Endothelial cell of umbilical vein (primary cell): ENCODE measurements at regions of chr1 and their contacts with region 1.

Region 1: DNA sequence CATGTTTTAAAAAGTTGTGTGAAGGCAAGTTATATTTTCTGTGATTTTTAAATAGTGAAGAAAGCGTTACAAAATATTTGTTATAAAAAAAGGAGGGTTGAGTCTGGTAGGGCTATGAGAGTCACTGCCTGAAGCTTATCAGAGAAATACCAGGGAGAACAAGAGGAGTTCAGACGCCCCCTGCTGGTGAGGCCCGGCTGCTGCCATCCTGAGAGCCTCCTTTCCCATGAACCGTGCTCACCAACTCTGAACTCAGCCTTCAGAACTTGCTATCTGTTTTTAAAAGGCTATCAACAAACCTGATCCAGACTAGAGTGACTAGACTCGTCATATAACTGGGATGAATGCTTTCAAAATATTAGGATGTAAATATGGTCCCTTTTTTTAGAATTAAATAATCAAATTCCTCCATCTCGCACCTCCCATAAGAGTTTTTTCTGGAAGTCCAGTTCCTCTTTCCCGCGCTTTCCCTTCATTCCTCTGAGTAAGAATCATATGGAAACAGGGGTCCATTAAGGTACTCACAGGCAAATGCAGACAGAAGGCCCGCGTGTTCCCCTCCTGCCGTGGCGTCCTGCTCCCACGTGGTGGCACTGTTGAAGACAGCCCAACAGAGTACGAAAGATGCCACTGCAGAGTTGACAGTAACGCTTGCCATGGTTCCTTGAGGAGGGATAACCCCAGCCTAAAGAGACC is 26.2 kb upstream of the SPATA6 start:
- DNase-seq: peak; percentile 73
- H3K4me3 ChIP-seq: no peak overlapping the region
- H3K27ac ChIP-seq: no peak overlapping the region
- H3K4me1 ChIP-seq: peaks cover 7% of the 10 kb centered on the region
- H3K27me3 ChIP-seq: no peaks in the 10 kb centered on the region
- CTCF ChIP-seq: peak; percentile 93 to 96
- POLR2A ChIP-seq: no peak

Region 2: GRCh38 chr1:47650197-47650596 is 848.0 kb before region 1 on chr1:
- CTCF ChIA-PET with region 1: no interaction called
- POLR2A ChIA-PET with region 1: no interaction called
- dilution Hi-C with region 1: no loop called
- intact Hi-C with region 1: no loop called
- DNase-seq: peak; percentile 96
- H3K4me3 ChIP-seq: no peak overlapping the region
- H3K27ac ChIP-seq: peak overlapping the region; percentile 74
- H3K4me1 ChIP-seq: peaks cover 11% of the 10 kb centered on the region
- H3K27me3 ChIP-seq: no peaks in the 10 kb centered on the region
- CTCF ChIP-seq: no peak
- POLR2A ChIP-seq: no peak

Region 3: DNA sequence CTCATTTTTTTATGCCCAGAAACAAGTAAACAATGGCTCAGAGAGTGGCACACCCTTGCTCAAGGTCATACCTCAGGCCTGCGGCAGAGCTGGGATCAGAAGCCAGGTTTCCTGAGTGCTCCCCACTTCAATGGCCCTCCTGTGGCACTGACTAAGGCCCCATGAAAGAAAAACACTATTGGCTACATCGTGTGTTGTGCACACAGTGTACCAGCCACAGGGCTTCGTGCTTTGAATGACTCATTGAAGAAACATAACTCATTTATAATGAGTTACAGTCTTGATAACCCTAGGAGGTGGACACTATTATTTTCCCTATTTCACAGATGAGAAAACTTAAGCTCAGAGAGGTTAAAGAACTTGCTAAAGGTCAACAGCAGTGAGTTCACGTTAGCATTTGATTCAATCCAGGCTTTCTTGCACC is 592.2 kb before region 1 on chr1:
- CTCF ChIA-PET with region 1: no interaction called
- POLR2A ChIA-PET with region 1: no interaction called
- dilution Hi-C with region 1: no loop called
- intact Hi-C with region 1: no loop called
- DNase-seq: peak; percentile 93
- H3K4me3 ChIP-seq: no peak overlapping the region
- H3K27ac ChIP-seq: peak overlapping the region; percentile 35
- H3K4me1 ChIP-seq: peaks cover 23% of the 10 kb centered on the region
- H3K27me3 ChIP-seq: no peaks in the 10 kb centered on the region
- CTCF ChIP-seq: no peak
- POLR2A ChIP-seq: no peak

Region 4: GRCh38 chr1:48202030-48202752 is 296.1 kb before region 1 on chr1:
- CTCF ChIA-PET with region 1: interaction called, 11 read pairs
- POLR2A ChIA-PET with region 1: no interaction called
- dilution Hi-C with region 1: no loop called
- intact Hi-C with region 1: no loop called
- DNase-seq: peak; percentile 60
- H3K4me3 ChIP-seq: no peak overlapping the region
- H3K27ac ChIP-seq: no peak overlapping the region
- H3K4me1 ChIP-seq: no peaks in the 10 kb centered on the region
- H3K27me3 ChIP-seq: no peaks in the 10 kb centered on the region
- CTCF ChIP-seq: peak; percentile 73 to 78
- POLR2A ChIP-seq: no peak

Region 5: GRCh38 chr1:48356901-48357300 is 141.3 kb before region 1 on chr1:
- CTCF ChIA-PET with region 1: interaction called, 39 read pairs
- POLR2A ChIA-PET with region 1: no interaction called
- dilution Hi-C with region 1: no loop called
- intact Hi-C with region 1: loop called (anchors 1 kb)
- DNase-seq: no peak
- H3K4me3 ChIP-seq: no peak overlapping the region
- H3K27ac ChIP-seq: no peak overlapping the region
- H3K4me1 ChIP-seq: no peaks in the 10 kb centered on the region
- H3K27me3 ChIP-seq: no peaks in the 10 kb centered on the region
- CTCF ChIP-seq: no peak
- POLR2A ChIP-seq: no peak

Region 6: GRCh38 chr1:48450505-48450904 is 47.7 kb before region 1 on chr1:
- CTCF ChIA-PET with region 1: interaction called, 36 read pairs
- POLR2A ChIA-PET with region 1: no interaction called
- dilution Hi-C with region 1: no loop called
- intact Hi-C with region 1: no loop called
- DNase-seq: peak; percentile 17
- H3K4me3 ChIP-seq: no peak overlapping the region
- H3K27ac ChIP-seq: no peak overlapping the region
- H3K4me1 ChIP-seq: no peaks in the 10 kb centered on the region
- H3K27me3 ChIP-seq: no peaks in the 10 kb centered on the region
- CTCF ChIP-seq: no peak
- POLR2A ChIP-seq: no peak

Region 7: GRCh38 chr1:48480504-48480903 is 17.7 kb before region 1 on chr1:
- CTCF ChIA-PET with region 1: interaction called, 13 read pairs
- POLR2A ChIA-PET with region 1: no interaction called
- dilution Hi-C with region 1: no loop called
- intact Hi-C with region 1: no loop called
- DNase-seq: no peak
- H3K4me3 ChIP-seq: no peak overlapping the region
- H3K27ac ChIP-seq: no peak overlapping the region
- H3K4me1 ChIP-seq: no peaks in the 10 kb centered on the region
- H3K27me3 ChIP-seq: peaks cover 0 to 4% of the 10 kb centered on the region in 2 experiments
- CTCF ChIP-seq: no peak
- POLR2A ChIP-seq: no peak